A549 (cell line): ENCODE measurements at regions of chr9 and their contacts with region 1.

Region 1: DNA sequence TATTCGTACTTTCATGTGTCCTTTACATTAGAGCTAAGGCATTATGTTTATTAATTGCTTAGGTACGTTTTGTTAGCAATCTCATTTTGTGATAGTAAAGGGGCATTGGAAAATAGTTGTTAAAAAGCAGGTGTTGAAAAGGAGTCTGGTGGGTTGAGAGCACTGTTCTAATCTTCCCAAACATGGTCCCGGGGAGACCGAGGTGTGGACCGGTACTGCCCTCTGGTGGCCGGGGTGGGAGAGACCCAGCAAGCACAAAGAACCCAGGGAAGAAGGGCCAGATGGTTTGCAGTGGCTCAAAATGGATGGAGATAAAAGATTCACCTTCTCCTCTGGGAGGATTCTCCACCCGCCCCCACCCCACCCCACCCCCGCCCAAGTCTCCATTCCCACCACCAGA is 26.1 kb downstream of the IDNK start:
- DNase-seq: peak; percentile 63 to 64
- ATAC-seq: peak; percentile 83 to 92; a peak in 5 of 6 replicates
- H3K4me3 ChIP-seq: no peak overlapping the region
- H3K27ac ChIP-seq: no peak overlapping the region
- H3K4me1 ChIP-seq: no peaks in the 10 kb centered on the region
- CTCF ChIP-seq: peak; percentile 77
- EP300 ChIP-seq: no peak
- POLR2A ChIP-seq: no peak
- RAD21 ChIP-seq: peak; percentile 60 to 68; a peak in 4 of 5 replicates

Region 2: DNA sequence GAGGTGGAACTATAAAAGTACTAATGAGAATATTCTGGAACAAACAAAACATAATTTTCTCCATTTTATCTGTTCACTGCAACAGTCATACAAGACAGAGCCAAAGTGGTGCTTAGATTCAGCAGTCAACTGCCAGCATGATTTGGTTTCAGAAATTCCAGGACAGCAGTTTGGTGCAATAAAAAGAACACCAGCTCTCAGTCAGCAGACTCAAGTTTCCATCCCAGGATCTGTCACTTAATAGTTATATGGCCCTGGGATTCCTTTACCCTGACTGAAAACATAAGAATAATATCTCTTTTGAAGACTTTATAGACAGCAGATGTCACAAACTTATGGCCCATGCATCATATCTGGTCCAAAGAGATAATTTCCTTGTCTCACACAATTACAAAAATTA is 493.3 kb before region 1 on chr9:
- CTCF ChIA-PET with region 1: no interaction called
- POLR2A ChIA-PET with region 1: no interaction called
- DNase-seq: no peak
- ATAC-seq: no peak
- H3K4me3 ChIP-seq: no peak overlapping the region
- H3K27ac ChIP-seq: no peak overlapping the region
- H3K4me1 ChIP-seq: 0 out of 3 replicates have a peak, but pooled peaks cover 3% of the 10 kb centered on the region
- CTCF ChIP-seq: no peak
- EP300 ChIP-seq: no peak
- POLR2A ChIP-seq: no peak
- RAD21 ChIP-seq: no peak

Region 3: DNA sequence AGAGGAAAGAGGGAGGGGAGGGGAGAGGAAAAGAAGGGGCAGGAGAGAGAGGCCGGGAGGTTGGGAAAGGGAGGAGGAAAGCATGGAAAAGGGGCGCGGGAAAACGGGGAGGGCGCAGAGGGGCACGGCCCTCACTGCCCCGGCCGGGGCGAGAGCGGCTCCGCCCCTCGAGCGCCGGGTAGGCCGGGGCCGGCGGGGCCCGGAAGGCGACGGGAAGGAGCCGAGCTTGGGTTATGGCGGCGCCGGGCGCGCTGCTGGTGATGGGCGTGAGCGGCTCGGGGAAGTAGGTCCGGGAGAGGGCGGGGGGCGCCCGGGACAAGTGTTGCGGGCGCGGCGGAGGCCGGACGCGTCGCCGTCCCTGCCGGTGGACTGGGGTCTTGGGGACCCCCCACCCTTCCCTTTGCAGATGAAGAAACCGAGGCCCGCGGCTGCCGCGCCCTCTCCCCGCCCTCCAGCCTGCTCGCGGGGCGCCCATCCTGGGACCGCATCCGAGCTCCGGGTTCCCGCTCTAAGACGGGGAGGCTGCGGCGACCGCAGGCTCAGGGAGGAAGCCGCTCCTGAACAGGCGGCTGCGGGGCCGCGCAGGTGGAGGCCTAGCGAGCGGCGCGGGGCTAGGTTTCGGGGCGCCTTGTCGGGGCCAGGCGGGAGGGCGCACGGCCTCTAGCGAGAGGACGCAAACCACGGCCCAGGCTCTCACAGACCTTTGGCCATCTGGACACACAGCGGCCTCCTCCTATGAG is 26.0 kb before region 1 on chr9 and contains the start of gene IDNK:
- CTCF ChIA-PET with region 1: interaction called, 16 read pairs
- POLR2A ChIA-PET with region 1: no interaction called
- DNase-seq: peak; percentile 49 to 71
- ATAC-seq: peak; percentile 89 to 94
- H3K4me3 ChIP-seq: peak within 1 kb of the TSS; percentile 62
- H3K27ac ChIP-seq: peak within 1 kb of the TSS; percentile 85 to 94
- H3K4me1 ChIP-seq: peaks cover 13% of the 10 kb centered on the region
- CTCF ChIP-seq: no peak
- EP300 ChIP-seq: no peak
- POLR2A ChIP-seq: peak; percentile 64
- RAD21 ChIP-seq: no peak
- polyA plus RNA-seq, gene IDNK: 13.4 and 16.2 TPM in 2 replicates

Region 4: GRCh38 chr9:83630938-83631457 is 18.1 kb before region 1 on chr9:
- CTCF ChIA-PET with region 1: interaction called, 11 read pairs
- POLR2A ChIA-PET with region 1: no interaction called
- DNase-seq: no peak
- ATAC-seq: no peak
- H3K4me3 ChIP-seq: no peak overlapping the region
- H3K27ac ChIP-seq: no peak overlapping the region
- H3K4me1 ChIP-seq: no peaks in the 10 kb centered on the region
- CTCF ChIP-seq: no peak
- EP300 ChIP-seq: no peak
- POLR2A ChIP-seq: no peak
- RAD21 ChIP-seq: no peak

Region 5: GRCh38 chr9:83636813-83637212 is 12.3 kb before region 1 on chr9:
- CTCF ChIA-PET with region 1: interaction called, 28 read pairs
- POLR2A ChIA-PET with region 1: no interaction called
- DNase-seq: no peak
- ATAC-seq: no peak
- H3K4me3 ChIP-seq: no peak overlapping the region
- H3K27ac ChIP-seq: no peak overlapping the region
- H3K4me1 ChIP-seq: no peaks in the 10 kb centered on the region
- CTCF ChIP-seq: no peak
- EP300 ChIP-seq: no peak
- POLR2A ChIP-seq: no peak
- RAD21 ChIP-seq: no peak